Activated T-helper 1 cell treated with anti-CD3 and anti-CD28 coated beads, Interleukin-12 subunit alpha, Interleukin-12 subunit beta, Interleukin-2, Interleukin-4 antibody, amounts not matched to agents 30 ng/mL and 10 ng/mL and 1 ng/mL, durations not matched to agents 14 hours and 24 hours and 36 hours (primary cell): ENCODE measurements at regions of chr15 and their contacts with region 1.

Region 1: DNA sequence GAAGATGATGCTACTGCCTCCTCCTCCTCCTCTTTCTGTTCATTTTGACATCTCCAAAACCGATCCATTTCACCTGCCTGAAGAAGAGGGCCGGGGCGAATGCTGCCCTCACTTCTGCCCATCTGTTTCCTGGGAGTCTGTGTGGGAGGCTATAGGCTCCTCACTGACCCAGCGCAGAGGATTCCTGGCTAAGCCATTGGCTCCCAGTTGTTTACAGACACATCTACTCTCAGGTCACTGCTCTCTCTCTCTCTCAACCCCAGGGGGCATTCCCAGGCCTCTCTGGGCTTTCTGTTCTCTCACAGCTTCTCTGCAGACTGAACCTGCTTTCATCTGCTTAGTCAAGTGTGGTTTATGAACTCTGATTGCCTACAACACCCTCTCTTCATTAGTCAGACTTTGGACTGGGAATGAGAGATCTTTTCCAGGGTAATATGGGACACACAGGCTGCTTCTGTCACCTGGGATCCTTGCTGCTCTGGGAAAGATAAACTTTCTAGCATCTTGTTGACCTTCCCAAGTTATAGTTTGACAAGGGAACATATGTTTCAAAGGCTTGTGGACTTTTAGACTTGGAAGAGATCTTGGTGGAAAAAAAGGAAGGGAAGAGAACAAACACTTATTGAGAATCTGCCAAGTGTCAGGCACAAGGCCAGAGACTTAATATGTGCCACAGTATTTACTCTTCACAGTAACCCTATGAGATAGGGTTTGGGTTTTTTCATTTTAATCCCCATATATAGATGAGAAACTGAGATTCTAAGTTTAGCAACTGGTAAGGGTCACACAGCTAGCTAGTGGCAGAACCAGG is 30.2 kb upstream of the USP3 start:
- DNase-seq: peak; percentile 52
- H3K4me3 Mint-ChIP-seq: peak overlapping the region; percentile 66
- H3K27ac Mint-ChIP-seq: peak overlapping the region; percentile 95
- H3K4me1 Mint-ChIP-seq: peaks cover 54% of the 10 kb centered on the region
- H3K27me3 Mint-ChIP-seq: peaks cover 1% of the 10 kb centered on the region

Region 2: GRCh38 chr15:63487076-63487757 is 13.0 kb after region 1 on chr15:
- intact Hi-C with region 1: loop called (anchors 1 kb)
- DNase-seq: peak; percentile 82
- H3K4me3 Mint-ChIP-seq: peak overlapping the region; percentile 13
- H3K27ac Mint-ChIP-seq: peak overlapping the region; percentile 40
- H3K4me1 Mint-ChIP-seq: peaks cover 49% of the 10 kb centered on the region
- H3K27me3 Mint-ChIP-seq: no peaks in the 10 kb centered on the region

Region 3: GRCh38 chr15:63497642-63498467 is 23.7 kb after region 1 on chr15:
- intact Hi-C with region 1: loop called (anchors 1 kb)
- DNase-seq: peak; percentile 59
- H3K4me3 Mint-ChIP-seq: no peak overlapping the region
- H3K27ac Mint-ChIP-seq: no peak overlapping the region
- H3K4me1 Mint-ChIP-seq: peaks cover 33% of the 10 kb centered on the region
- H3K27me3 Mint-ChIP-seq: no peaks in the 10 kb centered on the region

Region 4: GRCh38 chr15:63504247-63504978 is 30.2 kb after region 1 on chr15 and contains the start of gene USP3:
- intact Hi-C with region 1: loop called (anchors 1 kb)
- DNase-seq: peak; percentile 91
- H3K4me3 Mint-ChIP-seq: peak within 1 kb of the TSS; percentile 93
- H3K27ac Mint-ChIP-seq: peak within 1 kb of the TSS; percentile 93
- H3K4me1 Mint-ChIP-seq: peaks cover 83% of the 10 kb centered on the region
- H3K27me3 Mint-ChIP-seq: no peaks in the 10 kb centered on the region
- total RNA-seq, gene USP3: 46.9 and 58.9 TPM in 2 replicates

Region 5: DNA sequence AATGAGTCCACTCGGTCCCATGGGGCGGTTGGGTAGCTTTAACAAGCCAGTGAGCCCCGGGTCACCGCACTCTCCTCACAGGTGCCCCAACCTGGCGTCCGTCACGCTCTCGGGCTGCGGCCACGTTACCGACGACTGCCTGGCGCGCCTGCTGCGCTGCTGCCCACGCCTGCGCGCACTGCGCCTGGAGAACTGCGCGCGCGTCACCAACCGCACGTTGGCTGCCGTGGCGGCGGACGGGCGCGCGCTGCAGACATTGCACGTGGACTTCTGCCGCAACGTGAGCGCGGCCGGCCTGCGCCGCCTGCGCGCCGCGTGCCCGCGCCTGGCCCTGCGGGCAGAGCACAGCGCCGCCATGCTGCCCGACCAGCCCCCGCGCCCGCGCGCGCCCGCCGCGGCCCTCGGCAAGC is 126.4 kb after region 1 on chr15:
- intact Hi-C with region 1: loop called (anchors 1 kb)
- DNase-seq: peak; percentile 86
- H3K4me3 Mint-ChIP-seq: peak overlapping the region; percentile 88
- H3K27ac Mint-ChIP-seq: peak overlapping the region; percentile 87
- H3K4me1 Mint-ChIP-seq: peaks cover 51% of the 10 kb centered on the region
- H3K27me3 Mint-ChIP-seq: peaks cover 2% of the 10 kb centered on the region

Region 6: DNA sequence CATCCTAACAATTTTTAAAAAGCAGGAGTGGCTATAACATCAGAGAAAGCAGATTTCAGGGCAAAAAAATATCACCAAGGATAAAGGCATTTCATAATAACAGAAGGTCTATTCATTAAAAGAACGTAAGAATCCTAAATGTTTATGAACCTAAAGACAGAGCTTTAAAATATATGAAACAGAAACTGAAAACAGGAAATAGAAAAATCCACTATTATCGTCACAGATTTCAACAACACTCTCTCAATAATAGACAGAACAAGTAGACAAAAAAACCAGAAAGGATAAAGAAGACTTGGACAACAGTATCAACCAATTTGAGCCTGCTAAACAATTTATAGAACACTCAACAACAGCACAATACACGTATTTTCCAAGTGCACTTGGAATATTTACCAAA is 194.4 kb after region 1 on chr15:
- intact Hi-C with region 1: loop called (anchors 5 kb)
- DNase-seq: no peak
- H3K4me3 Mint-ChIP-seq: peak overlapping the region; percentile 68
- H3K27ac Mint-ChIP-seq: peak overlapping the region; percentile 72
- H3K4me1 Mint-ChIP-seq: peaks cover 58% of the 10 kb centered on the region
- H3K27me3 Mint-ChIP-seq: no peaks in the 10 kb centered on the region

Region 7: GRCh38 chr15:63805993-63806980 is 332.1 kb after region 1 on chr15:
- intact Hi-C with region 1: no loop called
- DNase-seq: no peak
- H3K4me3 Mint-ChIP-seq: no peak overlapping the region
- H3K27ac Mint-ChIP-seq: peak overlapping the region; percentile 19
- H3K4me1 Mint-ChIP-seq: peaks cover 52% of the 10 kb centered on the region
- H3K27me3 Mint-ChIP-seq: no peaks in the 10 kb centered on the region